ENCODE measurements at regions of chrX and their contacts with region 1.

Region 1: DNA sequence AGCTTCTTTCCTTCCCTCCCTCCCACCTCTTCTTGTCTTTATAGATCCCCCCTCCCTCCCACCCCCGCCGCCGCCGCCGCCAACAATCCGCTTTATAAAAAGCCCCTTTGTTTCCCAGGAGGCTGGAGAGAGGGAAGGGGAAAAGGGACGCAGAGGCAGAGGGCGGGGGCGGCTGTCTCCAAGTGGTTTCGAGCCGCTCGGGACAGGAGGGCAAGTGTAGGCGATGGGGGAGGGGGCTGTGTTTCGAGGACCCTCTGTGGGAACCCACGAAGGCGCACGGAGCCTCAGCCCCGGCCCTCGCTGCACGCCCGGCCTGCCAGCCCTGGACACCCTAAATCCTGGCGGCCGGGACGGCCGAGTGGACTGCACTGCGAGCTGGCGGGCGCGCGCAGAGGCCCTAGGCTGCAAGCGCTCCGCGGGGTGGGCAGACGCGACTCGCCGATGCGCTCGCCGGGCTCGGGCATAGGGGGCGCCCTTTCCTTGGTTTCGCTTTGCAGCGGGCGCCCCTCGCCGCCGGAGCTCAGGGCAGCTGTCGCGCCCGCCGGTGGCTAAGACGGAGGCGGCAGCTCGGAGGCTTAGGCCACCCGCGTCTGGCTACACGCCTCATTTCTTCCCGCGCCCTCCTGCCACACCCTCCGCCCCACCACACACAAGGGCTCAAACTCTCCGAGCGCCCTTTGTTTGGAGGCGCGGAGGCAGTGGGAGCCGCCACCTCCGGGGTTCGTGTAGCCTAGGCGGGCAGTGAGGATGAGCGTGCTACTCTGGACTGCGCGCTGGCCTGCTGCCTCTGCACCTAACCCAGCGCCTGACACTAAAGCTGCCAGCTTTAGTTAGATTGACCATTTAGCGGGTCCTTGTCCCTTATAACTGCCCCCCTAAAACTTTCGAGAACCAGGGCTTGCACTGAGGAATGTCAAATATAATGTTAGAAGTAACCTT is 2.2 kb downstream of the MAMLD1 start:
- DNase-seq: peak; percentile 53 to 60 (median 55)
- H3K4me3 ChIP-seq: peak overlapping the region in 1 of 2 donors; percentile 57
- H3K4me3 Mint-ChIP-seq: peak overlapping the region; percentile 84 to 93 (median 88)
- H3K27ac ChIP-seq: peak overlapping the region; percentile 31
- H3K27ac Mint-ChIP-seq: peak overlapping the region in 6 of 7 donors; percentile 29 to 85 (median 81)
- H3K4me1 ChIP-seq: peaks cover 5% of the 10 kb centered on the region
- H3K4me1 Mint-ChIP-seq: peaks cover 12 to 23% (median 19%) of the 10 kb centered on the region in 4 donors
- H3K27me3 ChIP-seq: no peaks in the 10 kb centered on the region
- H3K27me3 Mint-ChIP-seq: no peaks in the 10 kb centered on the region

Region 2: GRCh38 chrX:149504915-149505651 is 860.2 kb before region 1 on chrX and contains the start of gene IDS:
- CTCF ChIA-PET with region 1: no interaction called
- POLR2A ChIA-PET with region 1: no interaction called
- intact Hi-C with region 1: no loop called
- DNase-seq: peak; percentile 81 to 92 (median 87)
- H3K4me3 ChIP-seq: peak within 1 kb of the TSS; percentile 73 to 84
- H3K4me3 Mint-ChIP-seq: peak within 1 kb of the TSS; percentile 85 to 99 (median 96)
- H3K27ac ChIP-seq: peak within 1 kb of the TSS; percentile 95
- H3K27ac Mint-ChIP-seq: peak within 1 kb of the TSS in 6 of 7 donors; percentile 98 to 100 (median 99)
- H3K4me1 ChIP-seq: peaks cover 37% of the 10 kb centered on the region
- H3K4me1 Mint-ChIP-seq: peaks cover 9 to 39% (median 26%) of the 10 kb centered on the region in 4 donors
- H3K27me3 ChIP-seq: no peaks in the 10 kb centered on the region
- H3K27me3 Mint-ChIP-seq: peaks cover 0 to 3% of the 10 kb centered on the region in 2 donors
- total RNA-seq, gene IDS: 185 to 196 TPM

Region 3: DNA sequence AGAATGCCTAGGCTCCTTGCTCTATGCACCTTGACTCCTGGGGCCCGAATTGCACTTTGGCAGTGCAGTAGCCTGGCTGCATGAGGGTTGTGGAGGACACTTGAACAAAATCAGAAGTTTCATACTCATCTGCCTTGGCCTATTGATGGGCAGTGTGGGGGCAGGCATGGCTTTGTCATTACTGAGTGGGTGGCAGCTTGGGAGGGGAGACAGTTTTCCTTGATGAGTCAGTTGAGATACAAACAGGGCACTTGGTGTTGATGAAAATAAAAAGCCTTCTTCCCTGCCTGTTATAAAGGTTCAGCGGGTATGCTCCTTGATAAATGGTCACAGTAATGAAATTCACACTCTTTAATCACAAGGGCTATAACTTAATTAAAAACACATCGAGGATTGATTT is 129.0 kb before region 1 on chrX:
- CTCF ChIA-PET with region 1: no interaction called
- POLR2A ChIA-PET with region 1: no interaction called
- intact Hi-C with region 1: no loop called
- DNase-seq: no peak
- H3K4me3 ChIP-seq: no peak overlapping the region
- H3K4me3 Mint-ChIP-seq: no peak overlapping the region
- H3K27ac ChIP-seq: no peak overlapping the region
- H3K27ac Mint-ChIP-seq: no peak overlapping the region
- H3K4me1 ChIP-seq: no peaks in the 10 kb centered on the region
- H3K4me1 Mint-ChIP-seq: no peaks in the 10 kb centered on the region
- H3K27me3 ChIP-seq: no peaks in the 10 kb centered on the region
- H3K27me3 Mint-ChIP-seq: no peaks in the 10 kb centered on the region

Region 4: DNA sequence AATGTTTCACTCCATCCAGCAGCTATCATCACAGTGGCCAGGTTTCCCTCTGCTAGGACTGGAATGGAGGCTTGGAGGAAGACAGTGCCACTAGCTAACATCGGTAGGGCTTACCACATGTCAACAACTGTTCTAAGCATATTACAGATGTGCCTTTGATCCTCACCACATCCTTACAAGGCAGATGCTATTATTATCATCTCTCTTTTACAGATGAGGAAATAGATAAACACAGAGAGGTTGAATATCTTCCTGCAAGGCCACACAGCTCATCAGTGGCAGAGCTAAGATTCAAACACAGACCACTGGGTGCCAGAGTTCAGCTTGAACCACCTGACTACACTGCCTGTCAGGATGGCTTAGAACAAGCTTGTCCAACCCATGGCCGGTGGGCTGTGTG is 45.2 kb after region 1 on chrX:
- CTCF ChIA-PET with region 1: interaction called, 5 read pairs
- POLR2A ChIA-PET with region 1: interaction called, 11 read pairs
- intact Hi-C with region 1: no loop called
- DNase-seq: peak; percentile 41 to 68 (median 52)
- H3K4me3 ChIP-seq: no peak overlapping the region
- H3K4me3 Mint-ChIP-seq: peak overlapping the region in 7 of 8 donors; percentile 7 to 65 (median 40)
- H3K27ac ChIP-seq: no peak overlapping the region
- H3K27ac Mint-ChIP-seq: peak overlapping the region in 5 of 7 donors; percentile 15 to 63 (median 48)
- H3K4me1 ChIP-seq: peaks cover 25% of the 10 kb centered on the region
- H3K4me1 Mint-ChIP-seq: peaks cover 17 to 26% (median 21%) of the 10 kb centered on the region in 4 donors
- H3K27me3 ChIP-seq: no peaks in the 10 kb centered on the region
- H3K27me3 Mint-ChIP-seq: no peaks in the 10 kb centered on the region

Region 5: GRCh38 chrX:150486011-150486410 is 120.7 kb after region 1 on chrX:
- CTCF ChIA-PET with region 1: interaction called, 15 read pairs
- POLR2A ChIA-PET with region 1: interaction called, 4 read pairs
- intact Hi-C with region 1: loop called (anchors 1 kb)
- DNase-seq: peak; percentile 41 to 49 (median 45)
- H3K4me3 ChIP-seq: no peak overlapping the region
- H3K4me3 Mint-ChIP-seq: no peak overlapping the region
- H3K27ac ChIP-seq: no peak overlapping the region
- H3K27ac Mint-ChIP-seq: no peak overlapping the region
- H3K4me1 ChIP-seq: peaks cover 17% of the 10 kb centered on the region
- H3K4me1 Mint-ChIP-seq: peaks cover 0 to 14% (median 6%) of the 10 kb centered on the region in 4 donors
- H3K27me3 ChIP-seq: no peaks in the 10 kb centered on the region
- H3K27me3 Mint-ChIP-seq: no peaks in the 10 kb centered on the region

Region 6: DNA sequence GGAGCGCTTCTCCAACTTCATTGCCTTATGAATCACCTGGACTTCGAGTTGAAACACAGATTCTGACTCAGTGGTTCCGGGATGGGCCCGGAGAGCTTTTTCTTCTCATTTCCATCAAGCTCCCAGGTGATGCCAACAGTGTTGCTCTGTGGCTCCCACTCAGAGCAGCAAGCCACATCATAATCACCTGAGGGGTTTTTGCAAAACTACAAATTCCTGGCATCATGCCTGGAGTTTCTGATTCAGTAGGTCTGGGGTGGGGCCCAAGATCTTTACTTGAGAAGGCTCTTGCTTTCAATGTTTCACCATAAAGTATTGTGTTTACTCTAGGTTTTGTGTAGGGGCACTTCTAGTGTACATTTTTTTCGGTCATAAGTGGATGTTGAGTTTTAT is 210.1 kb after region 1 on chrX:
- CTCF ChIA-PET with region 1: interaction called, 3 read pairs
- POLR2A ChIA-PET with region 1: interaction called, 23 read pairs
- intact Hi-C with region 1: loop called (anchors 5 kb)
- DNase-seq: peak in 4 of 5 donors; percentile 30 to 85 (median 46)
- H3K4me3 ChIP-seq: peak overlapping the region; percentile 41 to 57
- H3K4me3 Mint-ChIP-seq: peak overlapping the region; percentile 78 to 90 (median 84)
- H3K27ac ChIP-seq: peak overlapping the region; percentile 78
- H3K27ac Mint-ChIP-seq: peak overlapping the region; percentile 86 to 100 (median 92)
- H3K4me1 ChIP-seq: peaks cover 88% of the 10 kb centered on the region
- H3K4me1 Mint-ChIP-seq: peaks cover 72 to 90% (median 78%) of the 10 kb centered on the region in 4 donors
- H3K27me3 ChIP-seq: no peaks in the 10 kb centered on the region
- H3K27me3 Mint-ChIP-seq: no peaks in the 10 kb centered on the region

Region 7: GRCh38 chrX:150693775-150694574 is 328.7 kb after region 1 on chrX:
- CTCF ChIA-PET with region 1: no interaction called
- POLR2A ChIA-PET with region 1: interaction called, 5 read pairs
- intact Hi-C with region 1: loop called (anchors 5 kb)
- DNase-seq: peak; percentile 53 to 78 (median 61)
- H3K4me3 ChIP-seq: peak overlapping the region; percentile 47 to 61
- H3K4me3 Mint-ChIP-seq: peak overlapping the region; percentile 93 to 98 (median 95)
- H3K27ac ChIP-seq: peak overlapping the region; percentile 71
- H3K27ac Mint-ChIP-seq: peak overlapping the region; percentile 95 to 99 (median 98)
- H3K4me1 ChIP-seq: peaks cover 73% of the 10 kb centered on the region
- H3K4me1 Mint-ChIP-seq: peaks cover 39 to 74% (median 61%) of the 10 kb centered on the region in 4 donors
- H3K27me3 ChIP-seq: no peaks in the 10 kb centered on the region
- H3K27me3 Mint-ChIP-seq: no peaks in the 10 kb centered on the region

Measured in CD4-positive, alpha-beta memory T cell (primary cell).